ENCODE measurements at regions of chr6 and their contacts with region 1.

Region 1: DNA sequence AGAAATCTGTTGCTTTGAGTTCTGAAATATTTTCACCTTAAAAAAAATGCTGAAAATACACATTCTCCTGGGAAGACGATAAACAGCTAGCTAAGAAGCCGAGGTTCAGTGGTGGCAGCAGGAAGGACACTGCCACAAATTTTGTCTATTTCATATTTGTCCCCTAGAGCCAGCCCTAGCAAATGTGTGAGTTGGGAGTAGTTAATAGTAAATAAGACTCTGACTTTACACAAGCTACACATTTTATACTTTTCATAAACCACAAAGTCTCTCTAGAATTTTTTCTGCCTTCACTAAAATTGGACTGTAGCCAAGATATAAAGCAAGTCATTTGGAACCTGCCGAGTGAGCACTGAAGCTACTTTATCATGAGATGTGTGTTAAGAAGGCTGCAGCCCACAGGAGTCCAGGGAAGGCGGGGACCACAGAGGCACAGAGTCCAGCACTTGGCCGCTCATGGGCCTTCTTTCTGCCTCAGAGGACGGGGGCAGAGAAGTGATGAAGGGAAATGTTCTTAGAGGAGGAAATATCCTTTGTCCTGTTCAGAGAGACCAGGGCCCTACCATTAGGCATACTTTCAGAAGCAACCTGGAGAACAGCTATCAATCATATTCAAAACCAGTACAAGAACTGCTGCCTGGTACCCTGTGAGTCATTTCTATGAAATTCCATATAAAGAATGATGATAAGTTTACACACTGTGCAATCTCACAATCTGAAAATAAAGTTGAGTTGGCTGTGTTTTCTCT is 241.7 kb upstream of the TAB2 start:
- DNase-seq: no peak
- H3K4me3 Mint-ChIP-seq: no peak overlapping the region
- H3K27ac Mint-ChIP-seq: peak overlapping the region; percentile 38
- H3K4me1 Mint-ChIP-seq: peaks cover 46% of the 10 kb centered on the region
- H3K27me3 Mint-ChIP-seq: no peaks in the 10 kb centered on the region

Region 2: DNA sequence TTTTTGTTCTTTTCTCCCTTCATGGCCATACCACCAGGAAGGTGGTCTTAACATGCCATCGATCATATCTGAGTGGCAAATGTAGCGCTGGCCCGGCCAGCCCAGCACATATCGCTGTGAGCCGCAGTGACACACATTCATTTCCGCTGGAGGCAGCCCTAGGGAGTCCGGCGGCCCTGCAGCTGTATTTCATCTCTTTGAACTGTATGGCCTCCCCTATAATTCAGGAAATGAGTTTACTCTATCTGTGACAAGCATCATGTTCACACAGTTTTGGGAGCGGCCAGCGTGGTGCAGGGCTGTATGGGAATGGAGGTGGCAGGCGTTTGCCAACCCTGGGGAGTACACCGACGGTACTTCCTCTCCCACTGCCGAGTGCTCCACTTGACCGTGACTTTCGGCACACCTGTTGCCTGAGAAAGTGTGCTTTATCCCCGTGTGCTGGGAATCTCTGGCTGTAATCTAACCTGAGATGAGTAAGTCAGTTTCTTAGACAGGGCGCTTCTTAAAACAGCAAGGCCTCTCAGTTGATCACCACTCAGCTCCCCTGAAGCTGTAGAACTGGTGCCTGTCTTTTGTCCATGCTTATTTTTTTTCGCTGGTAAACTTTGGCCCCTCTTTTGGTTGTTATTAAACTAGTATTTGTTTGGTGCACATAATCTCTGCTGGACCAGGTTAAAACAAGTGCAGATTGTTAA is 15.3 kb before region 1 on chr6:
- CTCF ChIA-PET with region 1: interaction called, 9 read pairs
- POLR2A ChIA-PET with region 1: interaction called, 74 read pairs
- DNase-seq: peak; percentile 78
- H3K4me3 Mint-ChIP-seq: peak overlapping the region; percentile 63
- H3K27ac Mint-ChIP-seq: peak overlapping the region; percentile 89
- H3K4me1 Mint-ChIP-seq: peaks cover 66% of the 10 kb centered on the region
- H3K27me3 Mint-ChIP-seq: no peaks in the 10 kb centered on the region

Region 3: DNA sequence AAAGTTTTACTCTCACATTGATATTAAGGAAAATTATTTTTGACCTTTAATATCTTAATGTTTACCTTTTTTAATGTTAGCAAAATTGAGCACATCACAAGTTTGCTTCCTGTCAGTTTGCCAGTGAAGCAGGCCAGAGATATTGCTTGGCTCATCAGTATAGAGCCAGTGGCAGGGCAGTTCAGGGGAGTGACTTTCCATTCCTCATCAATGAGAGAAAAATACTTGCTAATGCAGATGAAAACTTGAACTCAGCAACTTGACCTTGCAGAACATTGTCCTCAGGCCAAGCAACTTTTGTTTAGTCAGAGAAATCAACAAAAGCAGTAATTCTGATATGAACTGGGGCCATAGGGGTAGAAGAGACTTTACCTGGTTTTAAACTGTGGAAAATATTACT is 248.6 kb after region 1 on chr6:
- CTCF ChIA-PET with region 1: interaction called, 4 read pairs
- POLR2A ChIA-PET with region 1: interaction called, 15 read pairs
- DNase-seq: peak; percentile 38
- H3K4me3 Mint-ChIP-seq: peak overlapping the region; percentile 53
- H3K27ac Mint-ChIP-seq: peak overlapping the region; percentile 64
- H3K4me1 Mint-ChIP-seq: peaks cover 76% of the 10 kb centered on the region
- H3K27me3 Mint-ChIP-seq: no peaks in the 10 kb centered on the region

Measured in activated CD4-positive, alpha-beta memory T cell treated with anti-CD3 and anti-CD28 coated beads, Interleukin-2, amount 10 ng/mL, durations not matched to agents 7 days and 5 days (primary cell).